ENCODE measurements at regions of chr11 and their contacts with region 1.

Region 1: GRCh38 chr11:18526521-18527296 is at the start of gene TSG101:
- DNase-seq: peak; percentile 95
- H3K4me3 Mint-ChIP-seq: peak within 1 kb of the TSS; percentile 100
- H3K27ac Mint-ChIP-seq: peak within 1 kb of the TSS; percentile 100
- H3K4me1 Mint-ChIP-seq: peaks cover 47% of the 10 kb centered on the region
- H3K27me3 Mint-ChIP-seq: no peaks in the 10 kb centered on the region
- total RNA-seq, gene TSG101: 41.7 to 45.6 TPM

Region 2: DNA sequence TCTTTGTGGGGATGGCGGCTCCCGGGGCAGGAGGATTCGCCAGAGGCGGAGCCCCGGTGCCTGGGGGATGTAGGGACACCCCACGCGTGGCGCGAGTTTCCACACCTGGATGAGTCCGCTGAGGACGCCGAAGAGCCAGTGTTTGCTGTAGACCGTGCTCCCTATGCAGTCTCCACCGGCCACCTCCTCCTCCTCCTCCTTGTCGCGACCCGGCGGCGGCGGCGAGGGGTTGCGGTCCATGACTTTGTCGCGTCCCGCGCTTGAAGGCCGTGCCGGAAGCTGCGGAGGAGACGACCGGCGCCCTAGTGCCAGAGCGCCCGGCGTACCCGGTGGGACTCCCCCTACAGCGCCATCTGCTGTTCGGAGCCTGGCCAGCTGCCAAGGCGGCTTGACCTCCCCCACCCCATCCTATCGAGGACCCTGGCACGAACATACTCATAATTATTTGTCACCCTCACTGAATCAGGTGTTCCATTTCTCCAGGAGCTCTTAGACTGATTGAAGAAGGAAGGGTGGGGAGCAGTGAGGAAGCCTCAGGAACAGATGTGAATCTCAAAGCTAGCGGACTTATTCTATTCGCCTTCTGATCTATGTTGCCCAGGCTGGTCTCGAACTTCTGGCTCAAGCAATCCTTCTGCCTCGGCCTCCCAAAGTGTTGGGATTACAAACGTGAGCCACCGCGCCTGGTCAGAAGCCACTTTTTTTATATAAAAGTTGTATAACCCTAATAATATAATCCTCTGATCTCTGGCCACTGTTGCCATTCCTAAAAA is 420.7 kb before region 1 on chr11 and contains the start of gene SAAL1:
- CTCF ChIA-PET with region 1: interaction called, 3 read pairs
- POLR2A ChIA-PET with region 1: no interaction called
- intact Hi-C with region 1: loop called (anchors 1 kb)
- DNase-seq: peak; percentile 94
- H3K4me3 Mint-ChIP-seq: peak within 1 kb of the TSS; percentile 92
- H3K27ac Mint-ChIP-seq: peak within 1 kb of the TSS; percentile 78
- H3K4me1 Mint-ChIP-seq: peaks cover 37% of the 10 kb centered on the region
- H3K27me3 Mint-ChIP-seq: peaks cover 4% of the 10 kb centered on the region
- total RNA-seq, gene SAAL1: 32.1 to 34.3 TPM

Region 3: DNA sequence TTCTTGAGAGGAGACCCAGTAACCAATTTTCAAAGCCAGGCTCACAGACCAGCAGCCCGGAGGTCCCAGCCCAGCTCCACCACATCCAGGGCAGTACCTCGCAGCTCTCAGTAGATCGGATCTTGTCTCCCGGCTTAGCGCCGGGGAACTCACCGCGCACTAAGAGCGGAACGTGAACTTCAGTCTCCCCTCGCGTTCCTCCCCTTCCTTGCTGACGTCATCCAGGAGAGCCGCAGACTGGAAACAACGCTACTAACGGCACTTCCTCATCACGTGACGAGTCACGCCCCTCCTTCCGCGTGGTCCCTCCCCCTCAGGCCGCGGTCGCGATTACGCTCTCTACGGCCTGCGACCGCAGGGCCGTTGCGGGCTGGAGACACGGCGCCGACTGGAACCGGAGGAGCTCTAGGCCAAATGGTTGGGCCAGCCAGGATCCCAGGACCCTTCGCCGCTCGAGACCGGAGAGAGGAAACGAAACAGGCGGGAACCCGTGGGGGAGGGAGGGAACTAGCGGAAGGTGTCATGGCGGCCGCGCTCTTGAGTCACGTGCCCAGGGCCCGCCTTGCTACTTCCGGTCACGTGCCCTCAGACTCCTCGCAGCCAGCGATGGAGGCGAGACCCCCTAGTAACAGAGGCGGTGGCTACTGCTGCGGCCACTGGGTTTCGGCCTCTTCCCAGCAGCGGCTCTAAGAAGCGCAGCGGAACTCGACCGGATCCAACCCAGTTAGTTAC is 204.6 kb before region 1 on chr11 and contains the starts of genes GTF2H1 and HPS5:
- CTCF ChIA-PET with region 1: interaction called, 3 read pairs
- POLR2A ChIA-PET with region 1: interaction called, 15 read pairs
- intact Hi-C with region 1: loop called (anchors 2 kb)
- DNase-seq: peak; percentile 97
- H3K4me3 Mint-ChIP-seq: peak within 1 kb of the TSS; percentile 97
- H3K27ac Mint-ChIP-seq: peak within 1 kb of the TSS; percentile 100
- H3K4me1 Mint-ChIP-seq: peaks cover 66% of the 10 kb centered on the region
- H3K27me3 Mint-ChIP-seq: no peaks in the 10 kb centered on the region
- total RNA-seq, gene GTF2H1: 37.3 to 39.5 TPM
- total RNA-seq, gene HPS5: 19.9 to 20.9 TPM

Region 4: DNA sequence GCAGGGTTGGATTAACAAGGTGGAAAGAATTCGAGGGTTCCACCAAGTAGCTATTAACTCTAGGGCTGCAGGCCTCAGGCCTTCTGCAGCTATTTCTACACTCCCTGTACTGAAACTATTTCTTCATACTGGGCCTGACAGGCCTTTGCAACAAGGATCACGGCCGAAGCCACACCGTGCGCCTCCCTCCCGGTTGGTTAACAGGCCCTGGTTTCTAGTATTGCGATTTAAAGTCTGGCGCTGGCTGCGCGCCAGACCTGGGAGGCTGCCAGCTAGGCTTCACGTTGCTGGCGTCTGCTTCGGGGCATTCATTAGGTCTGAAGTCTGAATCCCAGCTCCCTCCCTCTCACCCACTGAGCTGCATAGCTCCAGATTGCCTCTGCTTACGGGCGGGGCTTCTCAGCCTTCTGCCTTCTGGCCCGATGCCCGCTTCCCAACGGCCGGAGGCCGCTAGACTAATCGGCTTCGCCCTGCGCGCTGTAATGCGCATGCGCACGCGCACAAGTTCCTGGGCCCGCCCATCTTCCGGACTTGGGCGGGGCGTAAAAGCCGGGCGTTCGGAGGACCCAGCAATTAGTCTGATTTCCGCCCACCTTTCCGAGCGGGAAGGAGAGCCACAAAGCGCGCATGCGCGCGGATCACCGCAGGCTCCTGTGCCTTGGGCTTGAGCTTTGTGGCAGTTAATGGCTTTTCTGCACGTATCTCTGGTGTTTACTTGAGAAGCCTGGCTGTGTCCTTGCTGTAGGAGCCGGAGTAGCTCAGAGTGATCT is 130.8 kb before region 1 on chr11:
- CTCF ChIA-PET with region 1: interaction called, 5 read pairs
- POLR2A ChIA-PET with region 1: interaction called, 20 read pairs
- intact Hi-C with region 1: loop called (anchors 1 kb)
- DNase-seq: peak; percentile 98
- H3K4me3 Mint-ChIP-seq: peak overlapping the region; percentile 98
- H3K27ac Mint-ChIP-seq: peak overlapping the region; percentile 98
- H3K4me1 Mint-ChIP-seq: peaks cover 63% of the 10 kb centered on the region
- H3K27me3 Mint-ChIP-seq: no peaks in the 10 kb centered on the region

Region 5: DNA sequence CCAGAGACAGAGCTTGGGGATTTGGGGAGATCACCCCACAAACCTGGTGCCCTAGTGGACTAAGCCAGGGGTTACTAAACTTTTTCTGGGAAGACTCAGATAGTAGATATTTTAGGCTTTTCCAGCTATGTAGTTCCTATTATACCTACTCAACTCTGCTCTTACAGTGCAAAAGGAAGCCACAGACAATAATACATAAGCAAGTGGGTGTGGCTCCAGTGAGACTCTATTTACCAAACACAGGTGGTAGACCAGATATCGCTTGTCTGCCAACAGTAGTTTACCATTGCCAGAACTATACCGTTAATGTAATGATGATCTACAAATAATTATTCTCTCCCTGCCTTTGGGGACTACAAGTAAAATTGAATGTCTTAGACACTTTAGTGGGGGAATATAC is 107.7 kb before region 1 on chr11:
- CTCF ChIA-PET with region 1: no interaction called
- POLR2A ChIA-PET with region 1: no interaction called
- intact Hi-C with region 1: no loop called
- DNase-seq: no peak
- H3K4me3 Mint-ChIP-seq: no peak overlapping the region
- H3K27ac Mint-ChIP-seq: no peak overlapping the region
- H3K4me1 Mint-ChIP-seq: peaks cover 8% of the 10 kb centered on the region
- H3K27me3 Mint-ChIP-seq: no peaks in the 10 kb centered on the region

Region 6: DNA sequence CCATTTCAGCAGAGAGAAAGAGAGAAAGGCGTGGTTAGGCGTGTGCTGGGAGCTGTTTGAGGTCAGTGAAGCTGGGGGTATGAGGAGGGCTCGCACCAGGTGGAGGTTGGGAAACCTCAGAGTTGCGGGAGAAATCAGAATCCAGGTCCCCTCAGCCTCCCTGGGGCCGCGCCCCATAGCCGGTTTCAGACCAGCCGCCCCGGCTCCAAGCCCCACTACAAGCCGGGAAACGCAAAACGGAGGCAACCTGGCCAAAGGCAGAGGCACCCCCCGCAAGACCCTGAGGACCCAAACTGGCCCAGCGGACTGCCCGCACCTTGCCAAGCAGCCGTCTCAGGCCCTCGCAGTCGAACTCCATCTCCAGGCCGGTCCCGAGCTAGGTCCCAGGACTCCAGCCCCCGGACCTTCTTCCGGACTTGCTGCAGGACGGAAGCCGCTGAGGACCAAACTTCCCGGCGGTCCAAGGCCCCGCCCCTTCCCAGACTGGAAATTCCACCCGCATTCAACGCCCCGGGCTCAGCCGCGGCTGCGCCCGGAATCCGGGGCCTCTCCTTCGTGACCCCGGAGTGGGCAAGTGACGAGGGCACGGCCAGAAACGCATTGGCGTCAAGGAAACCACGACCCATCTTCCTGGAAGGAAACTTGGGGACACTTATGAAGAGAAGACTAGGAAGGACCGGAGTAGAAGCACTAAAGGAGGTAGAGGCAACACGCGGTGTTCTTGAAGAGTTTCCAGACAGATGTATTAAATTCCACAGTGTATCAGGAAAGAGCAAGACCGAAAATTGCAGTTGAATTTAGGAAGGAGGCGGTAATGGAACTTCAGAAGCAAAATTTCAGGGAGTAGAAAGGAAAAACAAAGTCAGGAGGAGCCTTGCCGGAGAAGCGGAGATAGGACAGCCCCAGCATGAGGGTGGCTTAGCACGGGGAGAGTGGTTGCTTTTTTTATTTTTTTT is 61.9 kb after region 1 on chr11 and contains the start of gene UEVLD:
- CTCF ChIA-PET with region 1: no interaction called
- POLR2A ChIA-PET with region 1: interaction called, 3 read pairs
- intact Hi-C with region 1: loop called (anchors 1 kb)
- DNase-seq: peak; percentile 81
- H3K4me3 Mint-ChIP-seq: no peak within 1 kb of the TSS
- H3K27ac Mint-ChIP-seq: no peak within 1 kb of the TSS
- H3K4me1 Mint-ChIP-seq: peaks cover 10% of the 10 kb centered on the region
- H3K27me3 Mint-ChIP-seq: no peaks in the 10 kb centered on the region
- total RNA-seq, gene UEVLD: 20.9 to 26.2 TPM

Region 7: GRCh38 chr11:18608376-18608775 is 81.7 kb after region 1 on chr11:
- CTCF ChIA-PET with region 1: no interaction called
- POLR2A ChIA-PET with region 1: no interaction called
- intact Hi-C with region 1: no loop called
- DNase-seq: no peak
- H3K4me3 Mint-ChIP-seq: no peak overlapping the region
- H3K27ac Mint-ChIP-seq: no peak overlapping the region
- H3K4me1 Mint-ChIP-seq: no peaks in the 10 kb centered on the region
- H3K27me3 Mint-ChIP-seq: no peaks in the 10 kb centered on the region

Region 8: GRCh38 chr11:18650859-18651557 is 124.3 kb after region 1 on chr11:
- CTCF ChIA-PET with region 1: interaction called, 16 read pairs
- POLR2A ChIA-PET with region 1: no interaction called
- intact Hi-C with region 1: loop called (anchors 5 kb)
- DNase-seq: peak; percentile 58
- H3K4me3 Mint-ChIP-seq: peak overlapping the region; percentile 17
- H3K27ac Mint-ChIP-seq: no peak overlapping the region
- H3K4me1 Mint-ChIP-seq: peaks cover 4% of the 10 kb centered on the region
- H3K27me3 Mint-ChIP-seq: no peaks in the 10 kb centered on the region

Region 9: DNA sequence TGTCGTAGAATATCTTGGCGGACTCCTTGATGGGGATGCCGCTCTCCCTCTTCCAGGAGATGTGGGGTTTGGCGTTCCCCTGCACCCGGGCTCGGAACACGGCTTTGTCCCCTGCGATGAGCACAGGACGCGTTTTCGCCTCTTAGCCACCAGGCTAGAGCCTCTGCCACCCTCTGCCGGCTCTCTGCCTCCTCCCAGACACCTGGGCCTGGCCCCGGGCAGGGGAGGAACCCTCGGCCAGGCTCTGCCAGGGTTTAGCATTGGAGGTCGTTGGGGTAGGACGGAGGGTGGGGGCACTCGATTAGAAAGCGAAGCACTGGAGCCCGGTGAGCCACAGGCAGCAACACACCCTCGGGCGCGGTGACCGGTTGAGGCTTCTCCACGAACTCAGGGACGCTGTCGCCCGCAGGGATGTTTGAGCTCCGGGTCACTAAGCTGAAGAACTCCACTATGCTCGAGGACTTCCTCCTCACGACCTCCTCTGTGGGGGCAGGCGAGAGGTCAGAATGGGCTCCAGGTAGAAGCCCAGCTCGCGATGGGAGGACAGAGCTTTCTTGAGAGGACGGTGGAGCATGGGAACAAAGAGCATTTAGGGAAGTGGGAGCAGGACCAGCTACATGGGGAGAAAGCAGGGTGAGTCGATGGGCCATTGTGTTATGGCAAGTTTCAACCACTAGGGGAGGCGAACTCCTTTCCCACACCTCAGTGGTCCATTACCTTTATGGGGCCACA is 195.0 kb after region 1 on chr11:
- CTCF ChIA-PET with region 1: interaction called, 17 read pairs
- POLR2A ChIA-PET with region 1: interaction called, 5 read pairs
- intact Hi-C with region 1: loop called (anchors 5 kb)
- DNase-seq: peak; percentile 60
- H3K4me3 Mint-ChIP-seq: peak overlapping the region; percentile 81
- H3K27ac Mint-ChIP-seq: no peak overlapping the region
- H3K4me1 Mint-ChIP-seq: peaks cover 6% of the 10 kb centered on the region
- H3K27me3 Mint-ChIP-seq: no peaks in the 10 kb centered on the region